Left ventricle myocardium inferior (tissue), 1 donor: ENCODE measurements at regions of chr4 and their contacts with region 1.

Region 1: GRCh38 chr4:121794505-121795188 is 6.5 kb upstream of the EXOSC9 start:
- DNase-seq: no peak
- H3K4me3 ChIP-seq: no peak overlapping the region
- H3K27ac ChIP-seq: no peak overlapping the region
- H3K4me1 ChIP-seq: no peaks in the 10 kb centered on the region
- H3K27me3 ChIP-seq: peaks cover 19% of the 10 kb centered on the region
- CTCF ChIP-seq: no peak

Region 2: GRCh38 chr4:121763951-121764706 is 30.5 kb before region 1 on chr4:
- intact Hi-C with region 1: loop called (anchors 2 kb)
- DNase-seq: no peak
- H3K4me3 ChIP-seq: peak overlapping the region; percentile 66
- H3K27ac ChIP-seq: no peak overlapping the region
- H3K4me1 ChIP-seq: peaks cover 12% of the 10 kb centered on the region
- H3K27me3 ChIP-seq: peaks cover 92% of the 10 kb centered on the region
- CTCF ChIP-seq: no peak